Transverse colon (tissue), 4 donors: ENCODE measurements at regions of chr9 and their contacts with region 1.

Region 1: DNA sequence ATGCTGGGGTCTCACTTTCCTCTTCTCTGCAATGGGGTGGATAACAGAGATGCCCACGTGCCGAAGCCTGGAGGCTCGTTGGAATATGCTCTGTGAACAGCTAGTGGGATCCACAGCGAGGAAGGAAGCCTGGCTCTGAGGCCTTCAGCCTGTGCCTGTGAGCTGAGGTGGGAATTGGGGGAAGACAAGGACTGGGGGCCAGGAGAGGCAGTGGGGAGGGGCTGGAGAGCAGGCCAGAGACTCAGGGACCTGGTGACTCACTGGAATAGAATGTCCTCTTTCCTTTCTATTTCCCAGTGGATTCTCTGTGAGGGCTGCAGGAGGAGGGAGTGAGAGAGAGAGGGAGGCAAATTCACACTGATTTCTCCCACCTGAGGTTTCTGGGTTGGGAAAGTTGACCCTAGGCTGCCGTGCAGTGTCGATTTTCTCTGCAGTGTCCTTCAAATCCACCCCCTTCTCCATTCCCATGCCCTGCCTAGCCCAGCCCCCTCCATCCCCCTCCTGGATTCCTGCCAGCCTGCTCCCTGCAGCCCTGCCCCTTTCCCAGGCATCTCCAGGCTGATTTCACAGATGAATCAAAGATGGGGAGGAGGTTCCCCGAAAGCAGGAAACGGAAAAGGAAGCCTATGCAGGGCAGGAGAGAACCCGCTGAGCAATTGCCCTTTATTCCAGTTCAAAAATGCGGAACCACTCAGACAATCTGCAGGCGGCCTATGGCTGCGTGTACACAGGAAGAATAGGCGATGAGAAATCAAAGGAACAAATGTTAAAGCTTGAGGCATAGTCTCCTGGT is 1.4 kb upstream of the SPAAR start:
- DNase-seq: peak; percentile 70
- H3K4me3 ChIP-seq: peak overlapping the region in 2 of 4 donors; percentile 30 to 42
- H3K27ac ChIP-seq: peak overlapping the region; percentile 94 to 97 (median 96)
- H3K4me1 ChIP-seq: peaks cover 71 to 91% (median 75%) of the 10 kb centered on the region in 4 donors
- H3K27me3 ChIP-seq: no peaks in the 10 kb centered on the region
- CTCF ChIP-seq: no peak
- EP300 ChIP-seq: peak; percentile 55
- POLR2A ChIP-seq: no peak

Region 2: GRCh38 chr9:35945341-35946018 is 37.6 kb after region 1 on chr9:
- in situ Hi-C with region 1: no loop called
- intact Hi-C with region 1: loop called (anchors 5 kb)
- DNase-seq: peak; percentile 88
- H3K4me3 ChIP-seq: peak overlapping the region in 1 of 4 donors; percentile 8
- H3K27ac ChIP-seq: peak overlapping the region; percentile 54 to 74 (median 71)
- H3K4me1 ChIP-seq: peaks cover 5 to 69% (median 54%) of the 10 kb centered on the region in 4 donors
- H3K27me3 ChIP-seq: no peaks in the 10 kb centered on the region
- CTCF ChIP-seq: peak; percentile 76 to 88 (median 84)
- EP300 ChIP-seq: no peak
- POLR2A ChIP-seq: no peak